ENCODE measurements at regions of chr3 and their contacts with region 1.

Region 1: DNA sequence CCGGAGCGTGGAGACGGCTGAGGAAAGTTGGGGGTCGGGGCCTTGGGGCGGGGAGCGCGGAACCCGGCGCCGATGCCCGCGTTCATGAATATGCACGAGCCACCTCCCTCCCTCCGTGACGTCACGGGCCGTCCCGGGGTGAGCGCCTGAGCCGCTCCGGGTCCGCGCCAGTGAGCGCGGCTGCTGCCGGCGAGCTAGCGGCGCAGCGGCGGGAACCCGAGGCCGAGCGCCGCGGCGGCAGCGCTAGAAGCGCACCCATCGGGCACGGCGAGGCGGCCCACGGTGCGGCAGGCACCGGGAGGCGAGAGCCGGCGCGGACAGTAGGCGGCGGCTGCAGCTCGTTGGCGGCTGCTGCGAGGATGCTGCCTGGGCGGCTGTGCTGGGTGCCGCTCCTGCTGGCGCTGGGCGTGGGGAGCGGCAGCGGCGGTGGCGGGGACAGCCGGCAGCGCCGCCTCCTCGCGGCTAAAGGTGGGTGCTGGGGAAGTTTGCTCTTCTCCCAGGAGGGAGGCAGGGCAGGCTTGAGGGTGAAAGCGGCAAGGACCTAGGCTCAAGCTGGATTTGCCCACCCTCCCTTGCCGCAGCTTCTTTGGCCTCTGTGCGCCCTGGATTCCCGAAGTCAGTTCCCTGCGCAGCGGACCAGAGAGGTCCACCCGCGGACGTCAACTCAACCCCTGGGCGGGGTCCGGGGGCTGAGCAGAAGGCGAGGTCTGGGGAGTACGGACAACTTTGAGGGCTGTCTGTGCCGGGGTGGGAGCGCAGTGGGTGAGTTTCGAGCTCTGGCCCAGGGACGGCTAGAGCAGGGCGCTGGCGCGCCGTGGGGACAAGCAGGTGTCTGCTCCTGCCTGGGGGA is at the start of gene CLSTN2:
- DNase-seq: peak; percentile 90 to 94 (median 93)
- H3K4me3 ChIP-seq: peak within 1 kb of the TSS; percentile 67
- H3K27ac ChIP-seq: peak within 1 kb of the TSS; percentile 69 to 88
- H3K4me1 ChIP-seq: peaks cover 1% of the 10 kb centered on the region
- H3K27me3 ChIP-seq: no peaks in the 10 kb centered on the region
- CTCF ChIP-seq: peak in 2 of 3 donors; percentile 39 to 44
- EP300 ChIP-seq: no peak
- POLR2A ChIP-seq: peak; percentile 92
- total RNA-seq, gene CLSTN2: 103 to 263 (median 180) TPM

Region 2: GRCh38 chr3:139427283-139427993 is 507.8 kb before region 1 on chr3:
- intact Hi-C with region 1: loop called in 3 of 4 experiments (anchors 5 to 10 kb)
- DNase-seq: peak in 1 of 5 donors; percentile 28
- H3K4me3 ChIP-seq: no peak overlapping the region
- H3K27ac ChIP-seq: no peak overlapping the region
- H3K4me1 ChIP-seq: peaks cover 1% of the 10 kb centered on the region
- H3K27me3 ChIP-seq: no peaks in the 10 kb centered on the region
- CTCF ChIP-seq: peak; percentile 69 to 87 (median 84)
- EP300 ChIP-seq: no peak
- POLR2A ChIP-seq: no peak

Region 3: GRCh38 chr3:139561959-139562676 is 373.1 kb before region 1 on chr3:
- intact Hi-C with region 1: loop called in 1 of 4 experiments (anchors 5 kb)
- DNase-seq: peak in 4 of 5 donors; percentile 46 to 65 (median 54)
- H3K4me3 ChIP-seq: no peak overlapping the region
- H3K27ac ChIP-seq: no peak overlapping the region
- H3K4me1 ChIP-seq: no peaks in the 10 kb centered on the region
- H3K27me3 ChIP-seq: no peaks in the 10 kb centered on the region
- CTCF ChIP-seq: peak; percentile 33 to 83 (median 80)
- EP300 ChIP-seq: no peak
- POLR2A ChIP-seq: no peak

Region 4: DNA sequence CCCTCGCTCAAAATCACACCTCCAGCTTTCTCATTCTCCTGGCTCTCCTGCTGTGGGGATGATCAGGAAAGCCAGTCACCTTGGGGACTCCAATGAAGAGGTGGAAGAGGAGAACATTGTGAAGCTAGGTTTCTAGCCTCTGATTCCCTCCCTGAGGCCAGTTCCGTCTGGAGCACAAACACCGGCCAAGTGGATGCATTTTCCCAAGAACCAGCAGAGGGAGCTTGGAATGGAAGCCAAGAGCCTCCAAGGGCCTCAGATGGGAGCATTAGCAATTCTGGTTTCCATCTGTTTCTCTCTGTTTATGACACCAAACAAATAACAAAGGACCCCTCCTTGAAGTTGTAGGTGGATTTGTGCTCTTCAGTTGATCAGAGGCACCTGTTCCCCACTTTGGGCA is 216.8 kb before region 1 on chr3:
- intact Hi-C with region 1: loop called in 1 of 4 experiments (anchors 5 kb)
- DNase-seq: peak; percentile 53 to 76 (median 67)
- H3K4me3 ChIP-seq: no peak overlapping the region
- H3K27ac ChIP-seq: peak overlapping the region in 1 of 2 donors; percentile 54
- H3K4me1 ChIP-seq: peaks cover 8% of the 10 kb centered on the region
- H3K27me3 ChIP-seq: no peaks in the 10 kb centered on the region
- CTCF ChIP-seq: peak; percentile 30 to 65 (median 52)
- EP300 ChIP-seq: no peak
- POLR2A ChIP-seq: no peak

Region 5: DNA sequence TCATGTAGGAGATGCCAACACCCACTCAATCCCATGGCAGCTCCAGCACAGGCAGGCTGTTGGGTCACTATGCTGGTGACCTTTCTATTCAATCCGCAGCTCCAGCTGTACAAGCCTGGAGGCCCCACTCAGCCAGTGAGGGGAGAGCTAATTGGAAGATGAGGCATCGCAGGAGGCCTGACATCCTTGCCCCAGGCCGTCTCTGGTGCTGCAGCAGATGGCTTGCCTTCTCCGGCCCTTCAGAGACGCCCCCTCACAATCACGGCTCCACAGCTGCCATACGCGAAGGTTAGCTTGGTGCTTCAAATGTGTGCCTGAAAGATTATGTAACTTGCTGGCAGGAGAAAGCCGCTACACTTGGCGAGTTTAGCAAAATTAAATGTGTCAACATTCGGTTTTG is 104.4 kb before region 1 on chr3:
- intact Hi-C with region 1: no loop called
- DNase-seq: peak; percentile 67 to 80 (median 76)
- H3K4me3 ChIP-seq: no peak overlapping the region
- H3K27ac ChIP-seq: no peak overlapping the region
- H3K4me1 ChIP-seq: peaks cover 4% of the 10 kb centered on the region
- H3K27me3 ChIP-seq: no peaks in the 10 kb centered on the region
- CTCF ChIP-seq: no peak
- EP300 ChIP-seq: no peak
- POLR2A ChIP-seq: no peak

Region 6: DNA sequence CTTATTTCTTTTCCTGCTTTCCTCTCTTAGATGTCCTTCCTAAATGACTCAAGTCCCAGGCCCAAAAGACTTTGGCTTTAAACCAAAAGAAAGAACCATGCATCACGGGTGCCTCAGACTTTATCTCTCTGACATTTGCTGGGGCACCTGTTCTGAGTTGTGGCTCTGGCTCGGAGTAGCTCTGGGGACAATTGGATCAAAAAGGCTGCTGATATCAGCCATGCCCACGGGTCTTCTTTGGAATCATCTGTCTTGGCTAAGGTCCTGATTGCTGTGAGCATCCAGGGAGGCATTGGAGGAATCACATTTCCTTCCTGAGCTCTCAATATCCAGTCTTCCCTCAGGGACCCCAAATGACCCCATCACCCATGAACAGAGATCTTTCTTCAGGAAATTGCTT is 59.6 kb after region 1 on chr3:
- intact Hi-C with region 1: loop called in 1 of 4 experiments (anchors 2 kb)
- DNase-seq: no peak
- H3K4me3 ChIP-seq: no peak overlapping the region
- H3K27ac ChIP-seq: no peak overlapping the region
- H3K4me1 ChIP-seq: no peaks in the 10 kb centered on the region
- H3K27me3 ChIP-seq: no peaks in the 10 kb centered on the region
- CTCF ChIP-seq: no peak
- EP300 ChIP-seq: no peak
- POLR2A ChIP-seq: no peak

Region 7: GRCh38 chr3:140736863-140737460 is 801.7 kb after region 1 on chr3:
- intact Hi-C with region 1: loop called in 1 of 4 experiments (anchors 5 kb)
- DNase-seq: peak; percentile 52 to 83 (median 61)
- H3K4me3 ChIP-seq: no peak overlapping the region
- H3K27ac ChIP-seq: no peak overlapping the region
- H3K4me1 ChIP-seq: no peaks in the 10 kb centered on the region
- H3K27me3 ChIP-seq: no peaks in the 10 kb centered on the region
- CTCF ChIP-seq: peak; percentile 27 to 70 (median 29)
- EP300 ChIP-seq: no peak
- POLR2A ChIP-seq: no peak

Region 8: DNA sequence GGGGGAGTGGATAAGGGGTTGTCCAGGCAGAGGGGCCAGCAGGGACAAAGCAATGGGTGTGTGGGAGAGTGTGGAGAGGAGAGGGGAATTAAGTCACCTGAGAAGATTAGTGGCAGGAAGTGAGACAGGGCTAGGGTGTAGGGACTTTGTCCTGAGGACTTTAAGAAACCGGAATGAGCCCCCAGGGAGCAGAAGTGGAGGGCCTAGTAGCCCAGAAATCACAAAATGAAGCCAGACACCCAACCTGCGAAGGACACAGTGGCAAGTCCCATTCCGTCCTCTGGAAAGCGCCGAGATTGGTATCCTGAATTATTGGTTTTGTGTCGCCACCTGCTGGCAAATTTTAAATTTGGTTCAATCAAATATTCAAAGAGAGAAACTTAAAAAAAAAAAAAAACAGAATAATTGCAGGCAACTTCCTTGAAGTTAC is 928.4 kb after region 1 on chr3:
- intact Hi-C with region 1: loop called in 2 of 4 experiments (anchors 5 kb)
- DNase-seq: peak; percentile 47 to 82 (median 63)
- H3K4me3 ChIP-seq: no peak overlapping the region
- H3K27ac ChIP-seq: no peak overlapping the region
- H3K4me1 ChIP-seq: peaks cover 1% of the 10 kb centered on the region
- H3K27me3 ChIP-seq: no peaks in the 10 kb centered on the region
- CTCF ChIP-seq: peak; percentile 29 to 62 (median 58)
- EP300 ChIP-seq: no peak
- POLR2A ChIP-seq: no peak

Measured in ovary (tissue), 10 donors.